T-cell (primary cell): ENCODE measurements at regions of chr5 and their contacts with region 1.

Region 1: DNA sequence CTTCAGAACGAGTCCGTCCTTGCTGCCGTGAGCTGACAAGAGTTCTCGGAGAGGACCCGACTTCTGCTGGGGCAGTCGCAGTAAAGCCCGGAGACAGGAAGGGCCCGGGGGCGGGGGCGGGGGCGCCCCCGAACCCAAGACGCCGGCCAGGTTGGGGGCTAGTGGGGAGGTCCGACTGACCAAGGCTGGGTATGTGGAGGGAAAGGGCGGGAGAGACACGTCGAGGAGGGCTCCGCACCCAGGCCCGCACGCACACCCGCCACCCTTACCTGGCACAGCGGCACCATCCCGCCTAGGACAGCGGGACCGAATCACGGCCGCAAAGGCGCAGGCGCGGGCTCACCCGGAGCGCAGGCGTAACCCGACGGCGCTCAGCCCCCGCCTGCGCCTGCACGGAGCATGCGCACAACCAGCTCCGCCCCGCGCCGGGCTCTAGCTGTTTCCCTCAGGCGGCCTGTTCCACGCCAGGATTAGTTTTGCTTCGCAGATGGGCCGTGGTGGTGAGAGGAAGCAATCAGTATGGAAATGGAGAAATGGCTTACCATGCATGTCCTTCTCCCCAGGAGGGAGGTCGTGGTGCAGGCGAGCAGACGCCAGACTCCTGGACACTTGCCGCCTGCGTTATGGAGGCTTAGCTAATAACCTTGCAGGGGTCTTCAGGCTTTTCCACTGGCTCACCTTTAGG is at the start of gene MOCS2:
- DNase-seq: peak; percentile 78 to 95 (median 87)
- ATAC-seq: peak; percentile 95 to 97 (median 96)
- H3K4me3 ChIP-seq: peak within 1 kb of the TSS; percentile 83 to 89
- H3K4me3 Mint-ChIP-seq: peak within 1 kb of the TSS; percentile 92 to 97 (median 96)
- H3K27ac ChIP-seq: peak within 1 kb of the TSS; percentile 66
- H3K27ac Mint-ChIP-seq: peak within 1 kb of the TSS; percentile 87 to 96
- H3K4me1 ChIP-seq: peaks cover 9 to 12% of the 10 kb centered on the region in 2 experiments
- H3K4me1 Mint-ChIP-seq: peaks cover 42 to 61% (median 60%) of the 10 kb centered on the region in 3 donors
- H3K27me3 ChIP-seq: no peaks in the 10 kb centered on the region
- H3K27me3 Mint-ChIP-seq: no peaks in the 10 kb centered on the region
- total RNA-seq, gene MOCS2: 15.2 to 26.1 (median 21.0) TPM

Region 2: GRCh38 chr5:52760695-52761366 is 348.8 kb before region 1 on chr5:
- CTCF ChIA-PET with region 1: no interaction called
- POLR2A ChIA-PET with region 1: interaction called in 1 of 2 experiments, 16 read pairs
- DNase-seq: no peak
- ATAC-seq: no peak
- H3K4me3 ChIP-seq: no peak overlapping the region
- H3K4me3 Mint-ChIP-seq: no peak overlapping the region
- H3K27ac ChIP-seq: no peak overlapping the region
- H3K27ac Mint-ChIP-seq: no peak overlapping the region
- H3K4me1 ChIP-seq: peaks cover 0 to 2% of the 10 kb centered on the region in 2 experiments
- H3K4me1 Mint-ChIP-seq: peaks cover 0 to 7% (median 0%) of the 10 kb centered on the region in 3 donors
- H3K27me3 ChIP-seq: no peaks in the 10 kb centered on the region
- H3K27me3 Mint-ChIP-seq: no peaks in the 10 kb centered on the region

Region 3: GRCh38 chr5:52878656-52879055 is 230.9 kb before region 1 on chr5:
- CTCF ChIA-PET with region 1: no interaction called
- POLR2A ChIA-PET with region 1: no interaction called
- DNase-seq: no peak
- ATAC-seq: no peak
- H3K4me3 ChIP-seq: no peak overlapping the region
- H3K4me3 Mint-ChIP-seq: no peak overlapping the region
- H3K27ac ChIP-seq: no peak overlapping the region
- H3K27ac Mint-ChIP-seq: no peak overlapping the region
- H3K4me1 ChIP-seq: no peaks in the 10 kb centered on the region
- H3K4me1 Mint-ChIP-seq: no peaks in the 10 kb centered on the region
- H3K27me3 ChIP-seq: no peaks in the 10 kb centered on the region
- H3K27me3 Mint-ChIP-seq: peaks cover 0 to 3% of the 10 kb centered on the region in 2 donors

Region 4: GRCh38 chr5:53211799-53212198 is 102.2 kb after region 1 on chr5:
- CTCF ChIA-PET with region 1: no interaction called
- POLR2A ChIA-PET with region 1: no interaction called
- DNase-seq: no peak
- ATAC-seq: no peak
- H3K4me3 ChIP-seq: no peak overlapping the region
- H3K4me3 Mint-ChIP-seq: no peak overlapping the region
- H3K27ac ChIP-seq: no peak overlapping the region
- H3K27ac Mint-ChIP-seq: no peak overlapping the region
- H3K4me1 ChIP-seq: no peaks in the 10 kb centered on the region
- H3K4me1 Mint-ChIP-seq: no peaks in the 10 kb centered on the region
- H3K27me3 ChIP-seq: peaks cover 0 to under 1% of the 10 kb centered on the region in 2 experiments
- H3K27me3 Mint-ChIP-seq: peaks cover 5 to 18% of the 10 kb centered on the region in 2 donors

Region 5: GRCh38 chr5:53233652-53234405 is 124.2 kb after region 1 on chr5:
- CTCF ChIA-PET with region 1: no interaction called
- POLR2A ChIA-PET with region 1: no interaction called
- DNase-seq: no peak
- ATAC-seq: no peak
- H3K4me3 ChIP-seq: no peak overlapping the region
- H3K4me3 Mint-ChIP-seq: no peak overlapping the region
- H3K27ac ChIP-seq: no peak overlapping the region
- H3K27ac Mint-ChIP-seq: no peak overlapping the region
- H3K4me1 ChIP-seq: no peaks in the 10 kb centered on the region
- H3K4me1 Mint-ChIP-seq: no peaks in the 10 kb centered on the region
- H3K27me3 ChIP-seq: no peaks in the 10 kb centered on the region
- H3K27me3 Mint-ChIP-seq: peaks cover 8 to 9% of the 10 kb centered on the region in 2 donors